Tibial artery (tissue), 4 donors: ENCODE measurements at regions of chr10 and their contacts with region 1.

Region 1: GRCh38 chr10:71319042-71319799 is at the start of gene SLC29A3:
- DNase-seq: peak; percentile 74 to 88
- H3K4me3 ChIP-seq: peak within 1 kb of the TSS; percentile 64 to 79
- H3K27ac ChIP-seq: peak within 1 kb of the TSS; percentile 68 to 77
- H3K4me1 ChIP-seq: peaks cover 0 to 18% (median 14%) of the 10 kb centered on the region in 4 donors
- H3K27me3 ChIP-seq: no peaks in the 10 kb centered on the region
- CTCF ChIP-seq: peak; percentile 41 to 47

Region 2: DNA sequence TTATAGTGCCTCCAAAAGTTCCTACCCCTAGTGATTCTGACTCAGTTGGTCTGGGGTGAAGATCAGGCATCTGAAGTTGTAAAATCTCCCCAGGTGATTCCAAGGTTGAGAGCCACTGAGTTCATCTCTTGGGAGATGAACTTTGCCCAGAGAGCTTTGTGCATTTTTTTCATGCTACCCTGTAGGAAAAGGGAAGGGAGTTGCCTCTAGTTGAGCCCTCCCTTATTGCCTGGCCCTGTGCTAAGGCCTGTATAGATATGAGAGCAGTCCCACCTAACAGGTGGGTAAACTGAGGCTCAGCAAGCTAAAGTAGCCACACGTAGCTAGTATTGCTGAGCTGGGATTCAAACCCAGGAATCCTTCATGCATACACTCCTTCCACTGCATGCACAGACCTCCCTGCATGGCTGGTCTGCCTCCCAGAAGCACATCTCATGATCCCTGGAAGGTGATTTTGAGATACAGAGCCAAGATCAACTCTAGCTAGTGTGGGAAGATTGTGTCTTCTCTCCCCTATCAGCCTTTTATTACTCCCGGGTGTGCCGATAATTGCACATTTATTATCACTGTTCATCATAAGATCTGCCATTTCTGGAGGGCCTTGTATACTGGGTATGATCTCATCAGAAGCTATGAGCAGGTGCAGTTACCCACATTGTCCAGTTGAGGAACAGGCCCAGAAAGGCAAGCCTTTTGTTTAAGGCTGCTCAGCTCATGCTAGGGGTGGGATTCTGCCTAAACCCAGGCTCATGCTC is 581.0 kb before region 1 on chr10:
- intact Hi-C with region 1: no loop called
- DNase-seq: no peak
- H3K4me3 ChIP-seq: no peak overlapping the region
- H3K27ac ChIP-seq: no peak overlapping the region
- H3K4me1 ChIP-seq: peaks cover 0 to 10% (median 3%) of the 10 kb centered on the region in 4 donors
- H3K27me3 ChIP-seq: no peaks in the 10 kb centered on the region
- CTCF ChIP-seq: no peak

Region 3: DNA sequence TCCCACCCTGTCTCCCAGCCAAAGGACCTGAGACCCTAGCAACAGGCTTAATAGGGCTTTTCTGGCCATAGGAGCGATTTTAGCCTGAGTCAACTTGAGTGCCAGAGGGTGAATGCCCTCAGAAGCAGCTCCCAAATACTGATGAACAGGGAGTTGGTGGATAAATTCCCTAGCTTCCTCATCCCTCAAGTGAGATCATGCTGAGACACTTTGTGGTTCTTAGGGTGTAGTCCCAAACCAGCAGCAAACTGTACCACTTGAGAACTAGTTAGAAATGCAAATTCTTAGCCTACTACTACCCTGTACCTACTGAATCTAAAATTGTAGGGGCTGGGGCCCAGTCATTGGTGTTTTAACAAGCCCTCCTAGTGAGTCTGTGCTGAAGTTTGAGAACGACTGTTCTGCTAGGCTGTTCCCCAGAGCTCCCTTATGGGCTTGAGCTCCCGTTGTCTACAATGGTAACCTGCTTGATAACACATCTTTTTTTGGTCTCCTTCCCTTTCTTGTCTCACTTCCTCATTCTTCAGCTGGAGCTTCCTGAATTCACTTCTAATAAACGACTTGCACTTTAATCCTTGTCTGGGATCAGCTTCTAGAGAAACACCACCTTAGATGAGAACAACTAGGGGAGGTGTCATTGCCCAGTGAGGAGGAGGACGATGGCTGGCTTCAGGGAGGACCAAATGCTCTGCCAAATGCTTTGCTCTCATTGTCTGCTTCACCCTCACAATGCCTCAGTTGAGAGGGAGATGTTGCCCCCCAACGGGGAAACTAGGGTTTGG is 59.3 kb after region 1 on chr10:
- intact Hi-C with region 1: loop called (anchors 5 kb)
- DNase-seq: no peak
- H3K4me3 ChIP-seq: no peak overlapping the region
- H3K27ac ChIP-seq: peak overlapping the region in 1 of 2 donors; percentile 84
- H3K4me1 ChIP-seq: peaks cover 0 to 11% (median 8%) of the 10 kb centered on the region in 4 donors
- H3K27me3 ChIP-seq: no peaks in the 10 kb centered on the region
- CTCF ChIP-seq: no peak

Region 4: DNA sequence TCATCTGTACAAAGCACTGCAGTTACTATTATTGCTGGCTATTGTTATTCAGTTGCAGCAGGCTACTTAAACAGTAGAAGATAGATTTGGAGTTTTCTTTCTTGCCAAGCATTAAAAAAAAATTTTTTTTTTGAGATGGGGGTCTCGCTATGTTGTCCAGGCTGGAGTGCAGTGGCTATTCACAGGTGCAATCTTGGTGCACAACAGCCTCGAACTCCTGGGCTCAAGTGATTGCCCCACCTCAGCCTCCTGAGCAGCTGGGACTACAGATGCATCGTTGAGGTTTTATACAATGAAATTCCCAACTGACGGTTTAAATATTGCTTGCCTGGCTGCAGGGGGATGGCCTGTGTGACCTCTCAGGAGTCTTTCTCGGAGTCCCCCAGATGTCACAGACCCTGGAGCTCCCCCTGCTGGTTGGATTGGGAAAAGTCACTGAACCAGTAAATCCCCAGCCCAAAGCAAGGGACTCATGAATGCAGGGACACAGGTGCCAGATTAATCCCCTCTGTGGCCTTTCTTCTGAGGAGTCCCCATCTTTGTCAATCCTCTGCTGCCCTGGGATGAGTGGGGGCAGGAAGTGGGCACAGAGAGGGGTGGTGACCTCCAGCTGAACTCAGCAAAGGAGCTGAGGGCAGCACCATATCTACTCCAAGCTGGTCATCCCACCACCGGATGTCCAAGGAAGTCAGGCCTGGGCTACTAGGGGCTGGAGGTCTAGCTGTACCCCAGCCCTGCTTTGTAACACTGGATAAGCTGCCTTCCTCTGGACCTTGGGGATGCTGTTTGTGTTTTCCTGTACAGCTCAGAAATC is 250.8 kb after region 1 on chr10:
- intact Hi-C with region 1: loop called (anchors 5 kb)
- DNase-seq: peak; percentile 75 to 82
- H3K4me3 ChIP-seq: no peak overlapping the region
- H3K27ac ChIP-seq: no peak overlapping the region
- H3K4me1 ChIP-seq: no peaks in the 10 kb centered on the region
- H3K27me3 ChIP-seq: peaks cover 0 to 12% of the 10 kb centered on the region in 2 donors
- CTCF ChIP-seq: peak; percentile 75 to 84

Region 5: GRCh38 chr10:71696628-71697326 is 377.6 kb after region 1 on chr10:
- intact Hi-C with region 1: loop called (anchors 10 kb)
- DNase-seq: peak in 1 of 2 donors; percentile 48
- H3K4me3 ChIP-seq: no peak overlapping the region
- H3K27ac ChIP-seq: no peak overlapping the region
- H3K4me1 ChIP-seq: no peaks in the 10 kb centered on the region
- H3K27me3 ChIP-seq: peaks cover 0 to 9% of the 10 kb centered on the region in 2 donors
- CTCF ChIP-seq: peak; percentile 62 to 77

Region 6: DNA sequence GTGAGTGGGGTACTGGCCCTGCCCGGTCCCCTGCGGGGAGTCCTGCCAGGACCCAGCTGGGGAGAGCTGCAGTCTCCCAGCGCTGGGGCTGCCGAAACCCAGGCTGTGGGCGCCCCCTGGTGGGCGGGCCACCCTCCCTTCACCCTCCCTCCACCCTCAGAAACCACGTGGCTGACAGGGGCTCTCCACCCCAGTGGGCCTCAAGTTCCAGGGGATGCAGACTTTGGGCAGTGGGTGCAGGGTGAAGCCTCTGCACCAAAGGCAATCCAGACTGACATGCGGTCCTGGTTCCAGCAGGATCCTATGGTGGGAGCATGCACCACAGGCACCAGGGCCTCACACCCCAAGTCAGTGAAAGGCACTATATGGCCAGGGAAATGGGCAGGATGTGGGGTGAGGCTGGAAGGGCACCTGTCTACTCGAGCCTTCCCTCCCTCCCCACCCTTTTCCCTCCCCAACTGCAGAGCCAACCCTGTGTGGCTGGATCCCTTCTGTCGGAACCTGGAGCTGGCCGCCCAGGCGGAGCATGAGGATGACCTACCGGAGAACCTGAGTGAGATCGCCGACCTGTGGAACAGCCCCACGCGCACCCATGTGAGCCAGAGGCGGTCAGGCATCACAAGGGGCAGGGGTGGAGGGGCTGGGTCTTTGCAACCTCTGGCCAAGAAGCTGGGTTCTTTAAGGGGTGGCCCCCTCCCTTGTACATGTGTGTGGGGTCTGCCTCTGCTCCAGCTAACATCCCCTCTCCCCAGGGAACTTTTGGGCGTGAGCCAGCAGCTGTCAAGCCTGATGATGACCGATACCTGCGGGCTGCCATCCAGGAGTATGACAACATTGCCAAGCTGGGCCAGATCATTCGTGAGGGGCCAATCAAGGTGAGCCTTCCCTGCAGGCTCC is 493.0 kb after region 1 on chr10:
- intact Hi-C with region 1: loop called (anchors 5 kb)
- DNase-seq: peak in 1 of 2 donors; percentile 77
- H3K4me3 ChIP-seq: no peak overlapping the region
- H3K27ac ChIP-seq: no peak overlapping the region
- H3K4me1 ChIP-seq: no peaks in the 10 kb centered on the region
- H3K27me3 ChIP-seq: peaks cover 0 to 5% of the 10 kb centered on the region in 2 donors
- CTCF ChIP-seq: peak; percentile 87